ENCODE measurements at regions of chr17 and their contacts with region 1.

Region 1: GRCh38 chr17:74961657-74962490 is 10.7 kb downstream of the HID1 start:
- DNase-seq: peak; percentile 86
- H3K4me3 Mint-ChIP-seq: no peak overlapping the region
- H3K27ac Mint-ChIP-seq: no peak overlapping the region
- H3K4me1 Mint-ChIP-seq: peaks cover 7% of the 10 kb centered on the region
- H3K27me3 Mint-ChIP-seq: peaks cover 5% of the 10 kb centered on the region

Region 2: DNA sequence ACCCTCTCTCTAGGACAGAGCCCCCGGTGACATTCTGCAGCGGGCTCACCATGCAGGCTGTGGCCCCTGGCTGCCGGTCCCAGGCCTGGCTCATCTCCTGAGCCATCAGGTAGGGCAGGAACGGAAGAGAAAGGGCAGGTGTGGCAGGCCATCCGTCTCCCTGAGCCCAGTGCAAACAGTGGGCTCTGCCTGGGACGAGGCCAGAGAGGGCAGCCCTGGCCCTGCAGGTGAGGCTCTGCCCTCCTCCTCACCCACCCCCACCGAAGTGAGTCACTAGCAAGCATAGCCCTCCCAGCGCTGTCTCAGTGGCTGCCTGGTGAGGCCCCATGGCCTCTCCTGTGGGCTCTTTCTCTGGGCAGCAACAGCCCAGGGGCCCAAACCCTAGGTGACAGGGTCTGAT is 11.7 kb before region 1 on chr17:
- CTCF ChIA-PET with region 1: interaction called, 20 read pairs
- POLR2A ChIA-PET with region 1: no interaction called
- DNase-seq: no peak
- H3K4me3 Mint-ChIP-seq: no peak overlapping the region
- H3K27ac Mint-ChIP-seq: no peak overlapping the region
- H3K4me1 Mint-ChIP-seq: no peaks in the 10 kb centered on the region
- H3K27me3 Mint-ChIP-seq: peaks cover 3% of the 10 kb centered on the region

Region 3: DNA sequence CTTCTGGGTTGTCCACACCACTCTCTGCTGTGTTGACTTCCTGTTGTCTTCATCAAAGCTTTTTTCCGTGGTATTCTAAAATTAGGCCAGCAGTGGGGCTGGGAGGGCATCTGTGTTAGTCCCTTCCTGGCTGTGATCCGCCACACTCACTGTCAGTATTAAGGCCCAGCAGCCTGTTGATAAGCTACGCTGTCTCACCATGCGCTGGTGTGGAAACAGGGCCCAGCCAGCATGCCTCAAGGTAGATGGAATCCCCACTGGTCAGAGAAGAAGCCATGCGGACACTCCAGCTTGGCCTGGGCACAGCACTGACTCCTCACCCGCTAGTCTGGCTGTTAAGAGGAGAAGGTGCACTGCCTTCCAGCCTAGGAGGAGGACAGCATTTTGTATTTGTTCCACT is 36.9 kb after region 1 on chr17:
- CTCF ChIA-PET with region 1: interaction called, 18 read pairs
- POLR2A ChIA-PET with region 1: no interaction called
- DNase-seq: no peak
- H3K4me3 Mint-ChIP-seq: no peak overlapping the region
- H3K27ac Mint-ChIP-seq: no peak overlapping the region
- H3K4me1 Mint-ChIP-seq: peaks cover 7% of the 10 kb centered on the region
- H3K27me3 Mint-ChIP-seq: peaks cover 4% of the 10 kb centered on the region

Region 4: GRCh38 chr17:75024686-75025397 is 63.0 kb after region 1 on chr17:
- CTCF ChIA-PET with region 1: interaction called, 29 read pairs
- POLR2A ChIA-PET with region 1: no interaction called
- DNase-seq: peak; percentile 54
- H3K4me3 Mint-ChIP-seq: no peak overlapping the region
- H3K27ac Mint-ChIP-seq: no peak overlapping the region
- H3K4me1 Mint-ChIP-seq: peaks cover 16% of the 10 kb centered on the region
- H3K27me3 Mint-ChIP-seq: peaks cover 2% of the 10 kb centered on the region

Region 5: DNA sequence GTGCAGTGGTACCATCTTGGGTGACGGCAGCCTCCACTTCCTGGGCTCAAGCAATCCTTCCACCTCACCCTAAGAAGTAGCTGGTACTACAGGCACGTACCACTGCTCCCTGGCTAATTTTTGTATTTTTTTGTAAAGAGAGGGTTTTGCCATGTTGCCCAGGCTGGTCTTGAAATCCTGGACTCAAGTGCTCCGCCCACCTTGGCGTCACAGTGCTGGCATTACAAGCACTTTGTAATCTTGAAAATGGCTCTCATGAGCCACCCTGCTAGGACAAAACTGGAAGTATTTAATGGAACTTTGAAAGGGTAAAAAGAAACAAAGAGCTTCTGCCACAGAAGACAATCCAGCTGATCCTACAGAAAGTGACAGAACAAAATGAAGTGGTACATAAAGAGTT is 211.7 kb after region 1 on chr17:
- CTCF ChIA-PET with region 1: interaction called, 21 read pairs
- POLR2A ChIA-PET with region 1: no interaction called
- DNase-seq: no peak
- H3K4me3 Mint-ChIP-seq: no peak overlapping the region
- H3K27ac Mint-ChIP-seq: no peak overlapping the region
- H3K4me1 Mint-ChIP-seq: peaks cover 32% of the 10 kb centered on the region
- H3K27me3 Mint-ChIP-seq: no peaks in the 10 kb centered on the region

Region 6: GRCh38 chr17:75393523-75394331 is 431.9 kb after region 1 on chr17:
- CTCF ChIA-PET with region 1: no interaction called
- POLR2A ChIA-PET with region 1: no interaction called
- DNase-seq: peak; percentile 86
- H3K4me3 Mint-ChIP-seq: peak overlapping the region; percentile 90
- H3K27ac Mint-ChIP-seq: peak overlapping the region; percentile 59
- H3K4me1 Mint-ChIP-seq: peaks cover 72% of the 10 kb centered on the region
- H3K27me3 Mint-ChIP-seq: no peaks in the 10 kb centered on the region